B cell (primary cell): ENCODE measurements at regions of chr19 and their contacts with region 1.

Region 1: GRCh38 chr19:58079792-58080191 is 18.2 kb downstream of the ZSCAN18 start:
- DNase-seq: no peak
- ATAC-seq: no peak
- H3K4me3 ChIP-seq: no peak overlapping the region
- H3K4me3 Mint-ChIP-seq: no peak overlapping the region
- H3K27ac ChIP-seq: no peak overlapping the region
- H3K27ac Mint-ChIP-seq: no peak overlapping the region
- H3K4me1 ChIP-seq: no peaks in the 10 kb centered on the region
- H3K4me1 Mint-ChIP-seq: no peaks in the 10 kb centered on the region
- H3K27me3 ChIP-seq: no peaks in the 10 kb centered on the region
- H3K27me3 Mint-ChIP-seq: no peaks in the 10 kb centered on the region
- CTCF ChIP-seq: no peak

Region 2: GRCh38 chr19:58059003-58059670 is 20.7 kb before region 1 on chr19 and contains the start of gene ZNF135:
- CTCF ChIA-PET with region 1: no interaction called
- POLR2A ChIA-PET with region 1: interaction called, 10 read pairs
- intact Hi-C with region 1: no loop called
- DNase-seq: peak; percentile 88
- ATAC-seq: peak; percentile 86
- H3K4me3 ChIP-seq: peak within 1 kb of the TSS; percentile 9 to 81 (median 64)
- H3K4me3 Mint-ChIP-seq: peak within 1 kb of the TSS; percentile 86
- H3K27ac ChIP-seq: peak within 1 kb of the TSS; percentile 87 to 92
- H3K27ac Mint-ChIP-seq: peak within 1 kb of the TSS; percentile 91
- H3K4me1 ChIP-seq: peaks cover 8 to 16% of the 10 kb centered on the region in 2 donors
- H3K4me1 Mint-ChIP-seq: peaks cover 14% of the 10 kb centered on the region
- H3K27me3 ChIP-seq: peaks cover 0 to 7% (median 2%) of the 10 kb centered on the region in 4 experiments
- H3K27me3 Mint-ChIP-seq: peaks cover 16% of the 10 kb centered on the region
- CTCF ChIP-seq: no peak
- total RNA-seq, gene ZNF135: 10.0 and 10.1 TPM in 2 replicates

Region 3: DNA sequence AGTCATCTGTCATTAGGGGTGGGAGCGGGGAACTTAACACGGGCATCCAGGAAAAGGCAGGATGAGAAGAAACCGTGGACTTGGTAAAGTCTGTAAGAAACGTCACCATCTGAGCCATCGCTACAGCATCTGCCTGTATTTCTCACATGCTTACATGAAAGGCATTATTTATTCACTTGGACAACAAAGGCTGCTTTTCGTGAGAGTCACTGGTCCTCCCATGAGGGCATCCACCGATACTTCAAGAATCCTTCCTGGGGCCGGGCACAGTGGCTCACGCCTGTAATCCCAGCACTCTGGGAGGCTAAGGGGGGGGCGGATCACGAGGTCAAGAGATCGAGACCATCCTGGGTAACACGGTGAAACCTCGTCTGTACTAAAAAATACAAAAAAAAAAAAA is 412.5 kb after region 1 on chr19:
- CTCF ChIA-PET with region 1: no interaction called
- POLR2A ChIA-PET with region 1: no interaction called
- intact Hi-C with region 1: no loop called
- DNase-seq: no peak
- ATAC-seq: no peak
- H3K4me3 ChIP-seq: no peak overlapping the region
- H3K4me3 Mint-ChIP-seq: no peak overlapping the region
- H3K27ac ChIP-seq: no peak overlapping the region
- H3K27ac Mint-ChIP-seq: no peak overlapping the region
- H3K4me1 ChIP-seq: no peaks in the 10 kb centered on the region
- H3K4me1 Mint-ChIP-seq: no peaks in the 10 kb centered on the region
- H3K27me3 ChIP-seq: no peaks in the 10 kb centered on the region
- H3K27me3 Mint-ChIP-seq: no peaks in the 10 kb centered on the region
- CTCF ChIP-seq: no peak